Right cardiac atrium (tissue), 5 donors: ENCODE measurements at regions of chr6 and their contacts with region 1.

Region 1: GRCh38 chr6:35139908-35140655 is 1.1 kb downstream of the TCP11 start:
- DNase-seq: peak in 2 of 3 donors; percentile 38 to 55
- ATAC-seq: peak; percentile 39 to 58
- H3K4me3 ChIP-seq: no peak overlapping the region
- H3K27ac ChIP-seq: no peak overlapping the region
- H3K4me1 ChIP-seq: no peaks in the 10 kb centered on the region
- H3K27me3 ChIP-seq: no peaks in the 10 kb centered on the region

Region 2: GRCh38 chr6:35202066-35202546 is 62.0 kb after region 1 on chr6:
- intact Hi-C with region 1: loop called in 3 of 4 experiments (anchors 5 to 10 kb)
- DNase-seq: no peak
- ATAC-seq: peak in 1 of 2 donors; percentile 49
- H3K4me3 ChIP-seq: no peak overlapping the region
- H3K27ac ChIP-seq: no peak overlapping the region
- H3K4me1 ChIP-seq: peaks cover 9% of the 10 kb centered on the region
- H3K27me3 ChIP-seq: no peaks in the 10 kb centered on the region

Region 3: DNA sequence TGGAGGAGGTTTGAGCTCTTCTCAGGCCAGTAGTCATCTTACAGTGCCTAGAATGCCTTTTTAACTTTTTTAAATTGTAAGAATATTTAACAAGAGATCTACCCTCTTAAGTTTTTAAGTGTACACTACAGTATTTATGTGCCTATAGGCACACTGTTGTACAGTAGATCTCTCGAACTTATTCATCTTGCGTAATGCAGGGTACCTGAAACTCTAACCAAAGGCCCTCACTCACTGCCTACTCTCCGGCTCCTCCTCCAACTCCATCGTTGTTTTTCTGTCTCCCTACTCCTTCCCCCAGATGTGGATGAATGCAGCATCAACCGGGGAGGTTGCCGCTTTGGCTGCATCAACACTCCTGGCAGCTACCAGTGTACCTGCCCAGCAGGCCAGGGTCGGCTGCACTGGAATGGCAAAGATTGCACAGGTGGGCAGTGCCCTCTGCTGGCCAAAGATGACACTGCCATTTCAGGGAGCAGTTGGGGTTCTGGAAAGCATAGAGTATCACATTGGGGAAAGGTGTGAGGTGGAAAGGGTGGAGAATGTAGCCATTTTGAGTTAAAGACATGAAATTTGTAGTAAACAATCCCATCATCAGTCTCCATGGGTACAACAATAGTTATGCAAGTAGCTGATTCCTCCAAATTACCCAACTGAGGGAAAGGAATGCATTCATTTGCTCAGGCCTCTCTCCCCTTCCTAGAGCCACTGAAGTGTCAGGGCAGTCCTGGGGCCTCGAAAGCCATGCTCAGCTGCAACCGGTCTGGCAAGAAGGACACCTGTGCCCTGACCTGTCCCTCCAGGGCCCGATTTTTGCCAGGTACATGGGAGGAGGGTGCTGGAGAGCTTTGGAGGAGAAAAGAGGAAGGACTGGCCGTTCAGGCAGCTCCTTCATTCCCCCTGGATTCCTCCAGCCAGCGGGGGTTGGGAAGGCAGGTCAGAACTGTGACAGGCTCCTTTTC is 101.0 kb after region 1 on chr6:
- intact Hi-C with region 1: loop called in 3 of 4 experiments (anchors 2 to 10 kb)
- DNase-seq: peak; percentile 61 to 85 (median 85)
- ATAC-seq: peak; percentile 30 to 61
- H3K4me3 ChIP-seq: no peak overlapping the region
- H3K27ac ChIP-seq: no peak overlapping the region
- H3K4me1 ChIP-seq: peaks cover 6% of the 10 kb centered on the region
- H3K27me3 ChIP-seq: no peaks in the 10 kb centered on the region